HepG2 (cell line): ENCODE measurements at regions of chr2 and their contacts with region 1.

Region 1: DNA sequence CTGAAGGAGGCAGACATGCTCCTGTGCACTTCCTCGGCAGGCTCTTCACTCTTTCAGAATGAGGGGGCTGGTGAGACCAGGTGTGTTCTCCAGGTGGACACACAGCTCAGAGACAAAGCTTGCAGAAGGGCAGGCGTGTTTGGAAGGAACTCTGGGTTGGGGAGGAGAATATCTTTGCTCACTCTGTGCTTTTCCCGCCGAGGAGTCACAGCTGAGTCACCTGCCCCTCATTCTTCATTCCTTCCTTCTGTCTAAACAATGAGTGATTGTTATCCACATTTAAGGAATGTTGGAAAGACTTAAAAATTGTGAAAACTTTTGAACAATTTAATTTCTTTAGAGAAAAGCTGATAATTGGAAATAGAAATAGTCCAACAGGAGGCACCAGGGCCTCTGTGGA is 126.3 kb upstream of the TPO start:
- DNase-seq: no peak
- ATAC-seq: no peak
- H3K4me3 ChIP-seq: no peak overlapping the region
- H3K27ac ChIP-seq: no peak overlapping the region
- H3K4me1 ChIP-seq: no peaks in the 10 kb centered on the region
- H3K27me3 ChIP-seq: peaks cover 0 to 10% of the 10 kb centered on the region in 2 experiments; a peak in 1 of 5 replicates
- CTCF ChIP-seq: no peak
- EP300 ChIP-seq: no peak
- POLR2A ChIP-seq: no peak
- RAD21 ChIP-seq: no peak

Region 2: DNA sequence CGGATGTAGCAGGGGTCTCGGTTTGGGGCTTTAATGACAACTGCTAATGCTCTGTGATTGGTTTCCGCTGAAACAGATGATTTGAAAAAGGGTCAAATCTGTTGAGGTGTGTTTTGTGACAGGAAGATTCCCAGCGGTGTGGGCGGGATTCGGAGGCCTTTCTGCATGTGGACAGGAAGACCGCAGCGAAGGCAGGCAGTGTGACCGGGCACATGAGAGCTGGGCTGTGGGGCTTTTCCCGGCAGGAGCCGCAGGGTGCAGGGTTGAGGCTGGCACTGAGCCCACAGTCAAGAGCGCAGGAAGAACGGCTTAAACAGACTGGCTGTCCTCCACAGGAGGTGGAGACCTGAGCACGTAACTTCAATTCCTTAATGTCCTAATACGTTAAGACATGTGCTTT is 53.6 kb before region 1 on chr2:
- CTCF ChIA-PET with region 1: no interaction called
- POLR2A ChIA-PET with region 1: no interaction called
- in situ Hi-C with region 1: no loop called
- intact Hi-C with region 1: no loop called
- DNase-seq: no peak
- ATAC-seq: no peak
- H3K4me3 ChIP-seq: no peak overlapping the region
- H3K27ac ChIP-seq: no peak overlapping the region
- H3K4me1 ChIP-seq: no peaks in the 10 kb centered on the region
- H3K27me3 ChIP-seq: peaks cover 3 to 31% of the 10 kb centered on the region in 2 experiments; a peak in 3 of 5 replicates
- CTCF ChIP-seq: no peak
- EP300 ChIP-seq: no peak
- POLR2A ChIP-seq: no peak
- RAD21 ChIP-seq: no peak

Region 3: GRCh38 chr2:1324884-1325283 is 38.0 kb after region 1 on chr2:
- CTCF ChIA-PET with region 1: no interaction called
- POLR2A ChIA-PET with region 1: no interaction called
- in situ Hi-C with region 1: no loop called
- intact Hi-C with region 1: loop called (anchors 1 kb)
- DNase-seq: no peak
- ATAC-seq: no peak
- H3K4me3 ChIP-seq: no peak overlapping the region
- H3K27ac ChIP-seq: no peak overlapping the region
- H3K4me1 ChIP-seq: no peaks in the 10 kb centered on the region
- H3K27me3 ChIP-seq: no peaks in the 10 kb centered on the region; a peak in 1 of 5 replicates
- CTCF ChIP-seq: no peak
- EP300 ChIP-seq: no peak
- POLR2A ChIP-seq: no peak
- RAD21 ChIP-seq: no peak